ENCODE measurements at regions of chr5 and their contacts with region 1.

Region 1: GRCh38 chr5:93607367-93608258 is 24.6 kb downstream of the NR2F1 start:
- DNase-seq: peak; percentile 55
- ATAC-seq: peak; percentile 76
- H3K4me3 Mint-ChIP-seq: no peak overlapping the region
- H3K27ac Mint-ChIP-seq: no peak overlapping the region
- H3K4me1 Mint-ChIP-seq: peaks cover 18% of the 10 kb centered on the region
- H3K27me3 Mint-ChIP-seq: peaks cover 82% of the 10 kb centered on the region

Region 2: GRCh38 chr5:93587597-93588351 is 19.8 kb before region 1 on chr5:
- CTCF ChIA-PET with region 1: interaction called, 11 read pairs
- DNase-seq: no peak
- ATAC-seq: no peak
- H3K4me3 Mint-ChIP-seq: no peak overlapping the region
- H3K27ac Mint-ChIP-seq: peak overlapping the region; percentile 72
- H3K4me1 Mint-ChIP-seq: peaks cover 26% of the 10 kb centered on the region
- H3K27me3 Mint-ChIP-seq: peaks cover 73% of the 10 kb centered on the region

Region 3: DNA sequence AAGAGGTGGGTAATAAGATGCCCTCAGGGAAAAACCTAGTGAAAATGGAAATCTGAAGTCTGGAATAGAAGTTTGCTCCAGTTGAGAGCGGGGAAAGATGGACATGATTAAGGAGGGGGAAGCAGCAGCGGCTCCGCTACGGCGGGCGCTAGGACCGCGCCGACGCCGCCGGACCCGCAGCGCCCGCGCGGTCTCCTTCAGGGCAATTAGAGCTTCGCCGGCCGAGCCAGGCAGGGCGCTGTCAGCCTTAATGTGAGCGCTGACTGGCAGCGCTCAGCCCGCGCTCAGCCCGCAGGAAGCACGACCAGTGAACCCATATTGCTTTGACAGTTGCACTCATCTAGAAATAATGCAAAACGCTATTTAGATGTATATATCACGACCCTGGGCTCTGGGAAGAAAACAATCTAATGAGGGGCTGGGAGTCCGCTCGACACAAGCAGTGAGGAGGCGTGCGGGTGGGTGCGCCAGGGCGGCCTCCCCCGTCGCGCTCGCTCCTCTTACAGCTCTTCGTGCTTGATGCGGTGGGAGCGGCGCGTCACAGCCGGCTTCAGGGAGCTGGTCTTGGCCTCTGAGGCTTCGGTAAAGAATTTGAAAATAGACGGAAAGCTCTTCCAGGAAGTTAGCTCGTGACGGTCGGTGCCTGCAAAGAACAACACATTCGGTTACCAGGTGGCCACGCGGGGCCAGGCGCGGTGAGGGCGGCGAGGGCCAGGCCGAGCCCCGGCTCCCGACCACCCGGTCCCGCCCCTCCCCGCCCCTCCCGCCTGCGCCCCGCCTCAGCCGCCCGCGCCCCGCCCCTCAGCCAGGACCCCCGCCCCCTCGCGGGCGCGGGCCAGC is 13.1 kb after region 1 on chr5:
- CTCF ChIA-PET with region 1: interaction called, 12 read pairs
- DNase-seq: peak; percentile 74
- ATAC-seq: peak; percentile 91
- H3K4me3 Mint-ChIP-seq: peak overlapping the region; percentile 77
- H3K27ac Mint-ChIP-seq: peak overlapping the region; percentile 58
- H3K4me1 Mint-ChIP-seq: peaks cover 27% of the 10 kb centered on the region
- H3K27me3 Mint-ChIP-seq: peaks cover 42% of the 10 kb centered on the region

Region 4: GRCh38 chr5:93649234-93649900 is 41.8 kb after region 1 on chr5:
- CTCF ChIA-PET with region 1: no interaction called
- DNase-seq: no peak
- ATAC-seq: no peak
- H3K4me3 Mint-ChIP-seq: no peak overlapping the region
- H3K27ac Mint-ChIP-seq: no peak overlapping the region
- H3K4me1 Mint-ChIP-seq: peaks cover 9% of the 10 kb centered on the region
- H3K27me3 Mint-ChIP-seq: no peaks in the 10 kb centered on the region

Region 5: GRCh38 chr5:93800988-93801811 is 193.6 kb after region 1 on chr5:
- CTCF ChIA-PET with region 1: interaction called, 35 read pairs
- DNase-seq: no peak
- ATAC-seq: no peak
- H3K4me3 Mint-ChIP-seq: no peak overlapping the region
- H3K27ac Mint-ChIP-seq: no peak overlapping the region
- H3K4me1 Mint-ChIP-seq: peaks cover 4% of the 10 kb centered on the region
- H3K27me3 Mint-ChIP-seq: no peaks in the 10 kb centered on the region

Region 6: GRCh38 chr5:93909356-93909755 is 301.7 kb after region 1 on chr5:
- CTCF ChIA-PET with region 1: interaction called, 11 read pairs
- DNase-seq: no peak
- ATAC-seq: no peak
- H3K4me3 Mint-ChIP-seq: no peak overlapping the region
- H3K27ac Mint-ChIP-seq: no peak overlapping the region
- H3K4me1 Mint-ChIP-seq: no peaks in the 10 kb centered on the region
- H3K27me3 Mint-ChIP-seq: no peaks in the 10 kb centered on the region

Measured in activated CD8-positive, alpha-beta memory T cell treated with anti-CD3 and anti-CD28 coated beads, Interleukin-2, amount 10 ng/mL, durations not matched to agents 7 days and 5 days (primary cell).